ENCODE measurements at regions of chr9 and their contacts with region 1.

Region 1: GRCh38 chr9:110579862-110580219 is 300 bp upstream of the SVEP1 start:
- DNase-seq: peak in 4 of 5 donors; percentile 32 to 60 (median 38)
- ATAC-seq: peak in 3 of 4 donors; percentile 4 to 23 (median 23)
- H3K4me3 ChIP-seq: peak overlapping the region; percentile 34 to 76 (median 61)
- H3K27ac ChIP-seq: peak overlapping the region; percentile 64 to 88 (median 76)
- H3K4me1 ChIP-seq: peaks cover 0 to 18% (median 5%) of the 10 kb centered on the region in 12 donors
- H3K27me3 ChIP-seq: peaks cover 4 to 63% (median 22%) of the 10 kb centered on the region in 9 donors
- CTCF ChIP-seq: no peak
- POLR2A ChIP-seq: no peak

Region 2: DNA sequence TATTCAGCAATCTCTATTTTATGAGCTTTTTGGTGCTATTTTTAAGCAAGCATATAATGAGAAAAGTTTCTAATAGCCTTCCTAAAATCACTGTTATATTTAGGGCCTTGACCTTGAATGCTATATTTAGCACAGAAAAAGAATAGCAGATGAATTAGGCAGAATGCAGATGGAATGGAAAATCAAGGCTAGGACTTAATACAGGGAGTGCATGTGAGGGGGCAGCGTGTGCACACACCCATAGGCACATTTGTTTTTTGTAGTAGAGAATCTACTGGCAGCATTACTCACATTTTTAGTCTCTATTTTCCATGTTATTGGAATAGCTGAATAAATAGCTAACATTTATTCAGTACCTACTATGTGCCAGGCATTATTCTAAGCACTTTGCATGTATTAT is 80.2 kb before region 1 on chr9:
- intact Hi-C with region 1: loop called in 1 of 10 experiments (anchors 10 kb)
- DNase-seq: no peak
- ATAC-seq: no peak
- H3K4me3 ChIP-seq: no peak overlapping the region
- H3K27ac ChIP-seq: no peak overlapping the region
- H3K4me1 ChIP-seq: peaks cover 0 to 9% (median 0%) of the 10 kb centered on the region in 12 donors
- H3K27me3 ChIP-seq: no peaks in the 10 kb centered on the region
- CTCF ChIP-seq: no peak
- POLR2A ChIP-seq: no peak

Region 3: GRCh38 chr9:110509792-110510191 is 70.0 kb before region 1 on chr9:
- intact Hi-C with region 1: loop called in 1 of 10 experiments (anchors 10 kb)
- DNase-seq: no peak
- ATAC-seq: no peak
- H3K4me3 ChIP-seq: no peak overlapping the region
- H3K27ac ChIP-seq: no peak overlapping the region
- H3K4me1 ChIP-seq: no peaks in the 10 kb centered on the region
- H3K27me3 ChIP-seq: no peaks in the 10 kb centered on the region
- CTCF ChIP-seq: no peak
- POLR2A ChIP-seq: no peak

Region 4: DNA sequence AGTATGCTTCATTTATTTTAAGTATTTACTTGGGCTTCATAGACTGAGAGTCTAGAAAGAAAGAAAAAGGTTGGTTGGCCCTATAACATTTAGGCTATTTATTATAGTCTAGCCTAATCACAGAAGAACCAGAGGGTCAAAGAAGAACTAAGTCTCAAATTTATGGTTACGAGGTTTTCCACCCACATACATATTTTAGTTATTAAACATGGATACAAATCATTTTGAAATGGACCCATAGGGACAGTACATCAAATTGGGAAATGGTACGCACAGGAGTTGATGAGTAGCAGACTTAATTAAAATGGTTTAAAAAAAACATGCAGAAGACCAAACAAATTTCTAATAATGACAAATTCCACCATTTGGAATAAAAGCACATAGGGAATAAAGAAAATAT is 18.0 kb before region 1 on chr9:
- intact Hi-C with region 1: no loop called
- DNase-seq: no peak
- ATAC-seq: no peak
- H3K4me3 ChIP-seq: no peak overlapping the region
- H3K27ac ChIP-seq: no peak overlapping the region
- H3K4me1 ChIP-seq: no peaks in the 10 kb centered on the region
- H3K27me3 ChIP-seq: no peaks in the 10 kb centered on the region
- CTCF ChIP-seq: no peak
- POLR2A ChIP-seq: no peak

Measured in heart left ventricle (tissue), 16 donors.